Dendritic cell treated with granulocyte-macrophage colony-stimulating factor and Interleukin-4, amounts not matched to agents 40 ng/mL and 50 ng/mL, for 4 days (primary cell): ENCODE measurements at regions of chr4 and their contacts with region 1.

Region 1: DNA sequence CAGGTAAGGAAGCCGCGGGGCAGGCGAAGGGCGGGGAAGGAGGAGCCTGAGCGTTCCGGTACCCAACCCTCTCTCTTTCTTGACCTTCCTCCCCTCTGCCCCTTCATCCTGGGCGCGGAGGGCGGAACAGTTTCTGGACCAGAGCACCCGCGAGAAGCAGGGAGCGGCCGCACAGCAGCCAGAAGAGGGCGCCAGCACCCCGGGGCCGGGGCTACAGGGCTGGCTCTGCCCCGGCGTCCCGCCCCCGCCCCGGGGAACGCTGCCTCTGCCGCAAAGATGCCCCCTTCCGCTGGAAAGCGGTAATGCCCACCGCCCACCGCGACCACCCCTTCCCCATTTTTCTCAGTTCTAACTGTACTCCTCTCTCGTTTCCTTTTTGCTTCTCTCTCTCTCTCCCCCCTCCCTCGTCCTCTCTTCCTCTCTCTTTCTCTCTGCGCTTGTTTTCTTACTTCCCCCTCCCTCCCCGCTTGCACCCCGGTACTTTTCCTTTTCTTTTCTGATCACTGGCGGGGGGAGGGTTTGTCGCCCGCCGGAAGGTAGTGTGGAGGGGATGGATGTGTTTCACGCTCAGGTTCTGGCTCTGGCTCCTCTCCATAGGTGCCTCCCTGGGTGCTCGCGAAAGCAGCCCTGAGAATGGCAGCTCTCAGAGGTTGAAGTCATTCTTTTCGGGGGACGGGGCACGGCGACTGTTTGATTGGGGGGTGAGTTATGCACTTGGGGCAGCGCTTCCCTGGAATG is 13.1 kb upstream of the PRDM8 start:
- H3K4me3 Mint-ChIP-seq: peak overlapping the region; percentile 97
- H3K27ac Mint-ChIP-seq: peak overlapping the region; percentile 85
- H3K4me1 Mint-ChIP-seq: peaks cover 29% of the 10 kb centered on the region
- H3K27me3 Mint-ChIP-seq: peaks cover 57% of the 10 kb centered on the region

Region 2: GRCh38 chr4:80125252-80126177 is 58.7 kb before region 1 on chr4:
- intact Hi-C with region 1: loop called (anchors 5 kb)
- H3K4me3 Mint-ChIP-seq: no peak overlapping the region
- H3K27ac Mint-ChIP-seq: no peak overlapping the region
- H3K4me1 Mint-ChIP-seq: peaks cover 13% of the 10 kb centered on the region
- H3K27me3 Mint-ChIP-seq: no peaks in the 10 kb centered on the region

Region 3: DNA sequence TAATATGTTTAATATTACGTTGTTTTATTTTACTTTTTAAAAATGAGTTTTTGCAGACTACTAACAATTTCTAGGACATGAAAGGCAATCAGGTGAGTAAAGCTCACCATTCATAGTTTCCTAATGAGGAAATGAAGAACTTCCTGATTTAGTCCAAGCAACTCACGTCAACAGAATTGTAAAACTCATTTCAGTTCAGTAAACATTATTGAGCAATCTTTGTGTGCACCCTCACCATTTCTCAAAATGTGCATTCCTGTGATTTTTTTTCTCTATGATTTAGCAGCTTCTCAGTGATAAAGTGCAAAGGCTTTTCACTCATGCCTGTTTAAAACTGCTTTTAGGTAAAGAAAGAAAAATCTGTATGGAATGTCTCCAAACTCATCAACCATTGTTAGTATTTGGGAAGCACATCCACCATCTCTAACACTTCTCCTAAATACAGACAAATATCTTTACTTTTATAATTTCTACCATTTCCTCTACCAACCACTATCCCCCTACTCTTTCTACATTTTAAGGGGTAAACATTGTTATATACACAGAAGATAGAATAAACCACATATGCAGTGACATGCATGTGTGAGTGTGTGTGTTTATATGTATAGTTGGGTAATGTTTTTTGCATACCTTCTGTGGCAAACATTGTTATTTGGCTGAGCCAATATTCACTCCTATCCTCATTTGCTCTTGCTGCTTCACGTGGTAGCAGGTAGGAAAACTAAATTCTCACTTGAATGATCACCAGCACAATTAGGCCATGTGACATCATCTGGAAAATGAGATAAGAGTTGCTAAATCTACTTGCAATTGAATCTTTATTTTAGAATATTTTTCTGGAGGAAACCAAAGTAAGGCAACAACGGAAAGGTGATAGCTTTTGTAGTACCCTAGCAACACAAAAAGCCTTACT is 41.6 kb before region 1 on chr4:
- intact Hi-C with region 1: loop called (anchors 5 kb)
- H3K4me3 Mint-ChIP-seq: no peak overlapping the region
- H3K27ac Mint-ChIP-seq: no peak overlapping the region
- H3K4me1 Mint-ChIP-seq: peaks cover 54% of the 10 kb centered on the region
- H3K27me3 Mint-ChIP-seq: no peaks in the 10 kb centered on the region

Region 4: DNA sequence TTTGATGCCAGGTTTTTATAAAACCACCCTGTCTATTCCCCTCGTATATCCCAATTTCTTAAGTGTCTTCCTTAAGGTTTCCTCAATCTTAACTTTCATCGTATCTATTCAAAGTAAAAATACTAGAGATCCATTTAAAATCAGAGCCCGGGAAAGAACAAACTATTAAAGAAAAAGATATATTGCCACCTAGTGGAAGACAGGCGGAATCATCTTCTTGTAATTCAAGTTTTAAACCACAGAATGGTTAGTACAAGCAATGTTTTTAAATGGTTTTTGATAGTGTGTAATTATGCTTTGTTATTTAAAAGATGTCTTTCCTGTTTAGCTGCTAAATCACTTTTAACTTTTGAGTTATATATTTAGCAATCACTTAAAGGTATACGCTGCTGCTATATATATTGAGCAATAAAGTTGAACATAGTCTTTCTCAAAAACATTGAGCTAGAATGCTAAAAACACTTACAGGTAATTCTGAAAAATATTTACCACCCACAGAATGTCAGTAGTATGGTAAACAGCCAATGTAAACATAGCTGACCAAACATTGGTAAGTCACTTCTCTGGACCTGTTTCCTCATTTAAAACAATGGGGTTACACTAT is 31.3 kb after region 1 on chr4:
- intact Hi-C with region 1: loop called (anchors 1 kb)
- H3K4me3 Mint-ChIP-seq: no peak overlapping the region
- H3K27ac Mint-ChIP-seq: no peak overlapping the region
- H3K4me1 Mint-ChIP-seq: no peaks in the 10 kb centered on the region
- H3K27me3 Mint-ChIP-seq: peaks cover 8% of the 10 kb centered on the region